ENCODE measurements at regions of chr5 and their contacts with region 1.

Region 1: GRCh38 chr5:138449501-138450239 is 10.8 kb downstream of the REEP2 start:
- DNase-seq: peak; percentile 76
- H3K4me3 ChIP-seq: no peak overlapping the region
- H3K27ac ChIP-seq: no peak overlapping the region
- H3K4me1 ChIP-seq: peaks cover 6% of the 10 kb centered on the region
- H3K27me3 ChIP-seq: no peaks in the 10 kb centered on the region
- CTCF ChIP-seq: peak; percentile 91 to 95

Region 2: GRCh38 chr5:138464008-138464387 is 14.3 kb after region 1 on chr5:
- CTCF ChIA-PET with region 1: no interaction called
- dilution Hi-C with region 1: no loop called
- in situ Hi-C with region 1: no loop called
- intact Hi-C with region 1: loop called (anchors 1 kb)
- DNase-seq: peak; percentile 94
- H3K4me3 ChIP-seq: peak overlapping the region; percentile 66 to 90 (median 83)
- H3K27ac ChIP-seq: peak overlapping the region; percentile 84
- H3K4me1 ChIP-seq: peaks cover 45% of the 10 kb centered on the region
- H3K27me3 ChIP-seq: no peaks in the 10 kb centered on the region
- CTCF ChIP-seq: peak; percentile 58 to 71

Region 3: GRCh38 chr5:138552700-138553099 is 103.0 kb after region 1 on chr5:
- CTCF ChIA-PET with region 1: interaction called, 10 read pairs
- dilution Hi-C with region 1: no loop called
- in situ Hi-C with region 1: no loop called
- intact Hi-C with region 1: loop called (anchors 1 kb)
- DNase-seq: no peak
- H3K4me3 ChIP-seq: no peak overlapping the region
- H3K27ac ChIP-seq: no peak overlapping the region
- H3K4me1 ChIP-seq: no peaks in the 10 kb centered on the region
- H3K27me3 ChIP-seq: no peaks in the 10 kb centered on the region
- CTCF ChIP-seq: no peak